ENCODE measurements at regions of chr2 and their contacts with region 1.

Region 1: GRCh38 chr2:85741833-85742455 is 11.8 kb upstream of the ATOH8 start:
- DNase-seq: peak; percentile 75 to 84 (median 78)
- H3K4me3 ChIP-seq: no peak overlapping the region
- H3K27ac ChIP-seq: peak overlapping the region; percentile 51 to 89
- H3K4me1 ChIP-seq: peaks cover 33% of the 10 kb centered on the region
- H3K27me3 ChIP-seq: no peaks in the 10 kb centered on the region
- CTCF ChIP-seq: no peak
- EP300 ChIP-seq: no peak
- POLR2A ChIP-seq: no peak

Region 2: GRCh38 chr2:85797921-85798320 is 56.0 kb after region 1 on chr2:
- intact Hi-C with region 1: loop called in 1 of 4 experiments (anchors 5 kb)
- DNase-seq: peak in 1 of 5 donors; percentile 43
- H3K4me3 ChIP-seq: no peak overlapping the region
- H3K27ac ChIP-seq: no peak overlapping the region
- H3K4me1 ChIP-seq: peaks cover 30% of the 10 kb centered on the region
- H3K27me3 ChIP-seq: no peaks in the 10 kb centered on the region
- CTCF ChIP-seq: peak in 1 of 3 donors; percentile 67
- EP300 ChIP-seq: no peak
- POLR2A ChIP-seq: no peak

Region 3: DNA sequence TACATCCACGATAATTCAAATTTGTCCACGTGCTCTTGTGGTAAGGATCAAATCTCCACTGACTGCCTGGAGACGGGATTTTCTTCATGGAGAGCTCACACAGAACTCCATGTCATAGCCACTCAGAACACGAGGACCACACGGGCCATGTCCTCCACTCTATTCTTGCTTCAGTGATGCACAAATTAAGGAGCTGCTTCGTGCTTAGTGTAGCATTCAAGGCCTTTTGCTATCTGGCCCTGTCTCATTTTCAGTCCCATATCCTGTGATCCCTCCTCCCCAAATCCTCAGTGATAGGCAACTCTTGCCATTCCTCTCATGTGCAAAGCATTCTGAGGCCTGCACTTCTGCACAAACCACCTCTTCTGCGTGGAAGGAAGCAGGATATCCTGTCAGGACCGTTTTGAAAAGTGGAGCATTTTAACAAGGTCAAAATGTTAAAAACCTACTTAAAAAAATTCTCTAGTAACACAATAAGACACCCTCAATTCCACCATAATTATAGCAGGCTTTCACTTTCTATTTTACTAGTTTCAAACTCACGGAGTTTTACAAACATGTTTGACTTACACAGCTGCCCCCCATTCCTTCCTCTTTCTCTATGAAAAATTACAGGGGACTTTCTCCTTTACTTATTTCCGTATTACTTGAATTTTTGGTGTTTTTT is 111.7 kb after region 1 on chr2:
- intact Hi-C with region 1: no loop called
- DNase-seq: no peak
- H3K4me3 ChIP-seq: no peak overlapping the region
- H3K27ac ChIP-seq: peak overlapping the region in 1 of 2 donors; percentile 5
- H3K4me1 ChIP-seq: peaks cover 3% of the 10 kb centered on the region
- H3K27me3 ChIP-seq: no peaks in the 10 kb centered on the region
- CTCF ChIP-seq: no peak
- EP300 ChIP-seq: no peak
- POLR2A ChIP-seq: no peak

Region 4: GRCh38 chr2:86072271-86072858 is 330.4 kb after region 1 on chr2:
- intact Hi-C with region 1: loop called in 1 of 4 experiments (anchors 5 kb)
- DNase-seq: peak in 2 of 5 donors; percentile 38 to 49
- H3K4me3 ChIP-seq: no peak overlapping the region
- H3K27ac ChIP-seq: no peak overlapping the region
- H3K4me1 ChIP-seq: peaks cover 2% of the 10 kb centered on the region
- H3K27me3 ChIP-seq: no peaks in the 10 kb centered on the region
- CTCF ChIP-seq: no peak
- EP300 ChIP-seq: no peak
- POLR2A ChIP-seq: no peak

Region 5: DNA sequence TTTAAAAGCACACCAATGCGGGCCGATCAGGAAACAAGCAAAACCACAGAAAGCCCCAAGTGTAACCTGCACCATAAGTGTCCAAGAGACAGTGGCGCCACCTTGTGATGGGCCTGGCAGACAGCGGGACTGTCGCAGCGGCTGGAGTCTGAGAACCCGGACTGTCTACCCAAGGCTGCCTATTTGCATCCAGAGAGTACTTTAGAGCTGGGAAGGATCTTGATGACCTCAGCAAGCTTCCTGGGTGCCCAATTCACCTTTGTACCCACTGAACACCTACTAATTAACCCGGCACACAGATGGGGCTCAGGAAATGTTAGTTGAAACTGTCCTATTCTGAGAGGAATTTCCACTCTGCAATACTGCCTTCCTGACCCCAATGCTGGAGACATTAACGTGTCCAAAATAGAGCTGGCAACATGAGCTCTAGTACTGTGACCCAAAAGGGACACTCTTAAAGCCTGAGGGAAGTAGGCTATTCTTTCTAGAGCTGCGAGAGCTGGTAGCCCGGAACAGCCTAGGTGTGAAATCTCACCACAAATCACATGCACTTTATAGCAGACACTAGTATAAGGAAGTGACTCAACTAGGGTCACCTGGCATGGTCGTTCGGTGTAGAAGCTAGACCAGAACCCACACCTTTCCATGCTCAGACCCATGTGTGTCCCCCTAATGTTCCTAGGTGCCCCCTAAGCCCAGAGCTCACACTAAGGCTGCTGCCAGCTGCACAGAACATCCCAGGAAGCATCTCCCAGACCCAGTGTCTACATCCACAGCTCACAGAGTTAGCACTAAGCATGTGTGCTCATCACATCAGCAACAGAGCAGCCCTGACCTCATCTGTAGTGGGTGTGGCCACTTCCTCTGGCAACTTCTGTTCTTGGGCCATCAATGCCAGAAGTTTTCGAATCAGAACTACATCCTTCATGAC is 338.3 kb after region 1 on chr2:
- intact Hi-C with region 1: loop called in 1 of 4 experiments (anchors 10 kb)
- DNase-seq: peak; percentile 79 to 88 (median 85)
- H3K4me3 ChIP-seq: no peak overlapping the region
- H3K27ac ChIP-seq: no peak overlapping the region
- H3K4me1 ChIP-seq: no peaks in the 10 kb centered on the region
- H3K27me3 ChIP-seq: no peaks in the 10 kb centered on the region
- CTCF ChIP-seq: peak; percentile 49 to 72 (median 71)
- EP300 ChIP-seq: no peak
- POLR2A ChIP-seq: no peak

Region 6: GRCh38 chr2:86097114-86097896 is 355.4 kb after region 1 on chr2:
- intact Hi-C with region 1: no loop called
- DNase-seq: no peak
- H3K4me3 ChIP-seq: no peak overlapping the region
- H3K27ac ChIP-seq: no peak overlapping the region
- H3K4me1 ChIP-seq: peaks cover 2% of the 10 kb centered on the region
- H3K27me3 ChIP-seq: no peaks in the 10 kb centered on the region
- CTCF ChIP-seq: no peak
- EP300 ChIP-seq: no peak
- POLR2A ChIP-seq: no peak

Measured in ovary (tissue), 10 donors.